Activated CD4-positive, alpha-beta T cell treated with anti-CD3 and anti-CD28 coated beads for 36 hours (primary cell): ENCODE measurements at regions of chr16 and their contacts with region 1.

Region 1: GRCh38 chr16:57576429-57576870 is 34.0 kb downstream of the ADGRG5 start:
- DNase-seq: peak; percentile 91
- ATAC-seq: peak; percentile 82
- H3K4me3 Mint-ChIP-seq: no peak overlapping the region
- H3K27ac Mint-ChIP-seq: no peak overlapping the region
- H3K4me1 Mint-ChIP-seq: peaks cover 33% of the 10 kb centered on the region
- H3K27me3 Mint-ChIP-seq: peaks cover 5% of the 10 kb centered on the region

Region 2: GRCh38 chr16:57500578-57501111 is 75.8 kb before region 1 on chr16:
- CTCF ChIA-PET with region 1: no interaction called
- POLR2A ChIA-PET with region 1: no interaction called
- intact Hi-C with region 1: no loop called
- DNase-seq: no peak
- ATAC-seq: peak; percentile 88
- H3K4me3 Mint-ChIP-seq: no peak overlapping the region
- H3K27ac Mint-ChIP-seq: no peak overlapping the region
- H3K4me1 Mint-ChIP-seq: peaks cover 11% of the 10 kb centered on the region
- H3K27me3 Mint-ChIP-seq: no peaks in the 10 kb centered on the region

Region 3: GRCh38 chr16:57555831-57556230 is 20.6 kb before region 1 on chr16:
- CTCF ChIA-PET with region 1: interaction called, 16 read pairs
- POLR2A ChIA-PET with region 1: no interaction called
- intact Hi-C with region 1: no loop called
- DNase-seq: peak; percentile 47
- ATAC-seq: peak; percentile 69
- H3K4me3 Mint-ChIP-seq: no peak overlapping the region
- H3K27ac Mint-ChIP-seq: no peak overlapping the region
- H3K4me1 Mint-ChIP-seq: peaks cover 16% of the 10 kb centered on the region
- H3K27me3 Mint-ChIP-seq: peaks cover 2% of the 10 kb centered on the region

Region 4: DNA sequence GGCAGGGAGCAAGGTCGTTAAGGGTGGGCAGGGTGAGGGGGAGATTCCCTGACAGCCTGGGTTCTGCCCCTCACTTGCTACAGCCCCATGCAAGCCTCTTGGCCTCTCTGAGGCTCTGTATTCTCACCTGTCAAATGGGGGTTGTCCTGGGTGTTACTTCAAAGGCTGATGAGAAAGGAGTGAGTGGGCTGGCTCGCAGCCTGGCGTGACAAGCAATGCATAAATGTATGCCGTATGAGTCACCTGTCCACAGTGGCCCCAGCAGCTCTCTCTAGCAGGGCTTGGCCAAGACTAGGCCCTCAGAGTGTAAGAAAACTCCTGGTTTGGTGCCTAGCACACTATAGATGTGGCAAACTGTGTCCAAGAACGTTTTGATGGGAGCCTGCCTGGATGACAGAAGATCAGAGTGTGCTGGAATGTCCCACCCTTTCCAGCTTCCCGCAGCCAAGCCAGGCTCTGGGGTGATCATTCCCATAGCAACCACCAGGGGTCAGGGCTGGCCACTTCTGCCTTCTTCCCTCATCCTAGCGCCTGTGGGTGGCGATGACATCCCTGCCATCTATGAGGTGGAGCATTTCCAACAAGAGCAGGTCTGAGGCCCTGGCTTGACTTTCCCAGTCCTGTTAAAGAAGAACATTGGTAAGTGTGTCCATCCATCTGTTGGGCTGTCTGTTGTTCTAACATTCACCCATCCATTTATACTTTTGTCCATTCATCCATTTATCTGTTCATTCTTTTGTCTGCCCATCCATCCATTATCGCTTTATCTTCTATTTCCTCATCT is 14.8 kb after region 1 on chr16:
- CTCF ChIA-PET with region 1: interaction called, 24 read pairs
- POLR2A ChIA-PET with region 1: interaction called, 5 read pairs
- intact Hi-C with region 1: loop called in 1 of 2 experiments (anchors 2 kb)
- DNase-seq: peak; percentile 87
- ATAC-seq: peak; percentile 90
- H3K4me3 Mint-ChIP-seq: peak overlapping the region; percentile 60
- H3K27ac Mint-ChIP-seq: peak overlapping the region; percentile 92
- H3K4me1 Mint-ChIP-seq: peaks cover 32% of the 10 kb centered on the region
- H3K27me3 Mint-ChIP-seq: no peaks in the 10 kb centered on the region

Region 5: DNA sequence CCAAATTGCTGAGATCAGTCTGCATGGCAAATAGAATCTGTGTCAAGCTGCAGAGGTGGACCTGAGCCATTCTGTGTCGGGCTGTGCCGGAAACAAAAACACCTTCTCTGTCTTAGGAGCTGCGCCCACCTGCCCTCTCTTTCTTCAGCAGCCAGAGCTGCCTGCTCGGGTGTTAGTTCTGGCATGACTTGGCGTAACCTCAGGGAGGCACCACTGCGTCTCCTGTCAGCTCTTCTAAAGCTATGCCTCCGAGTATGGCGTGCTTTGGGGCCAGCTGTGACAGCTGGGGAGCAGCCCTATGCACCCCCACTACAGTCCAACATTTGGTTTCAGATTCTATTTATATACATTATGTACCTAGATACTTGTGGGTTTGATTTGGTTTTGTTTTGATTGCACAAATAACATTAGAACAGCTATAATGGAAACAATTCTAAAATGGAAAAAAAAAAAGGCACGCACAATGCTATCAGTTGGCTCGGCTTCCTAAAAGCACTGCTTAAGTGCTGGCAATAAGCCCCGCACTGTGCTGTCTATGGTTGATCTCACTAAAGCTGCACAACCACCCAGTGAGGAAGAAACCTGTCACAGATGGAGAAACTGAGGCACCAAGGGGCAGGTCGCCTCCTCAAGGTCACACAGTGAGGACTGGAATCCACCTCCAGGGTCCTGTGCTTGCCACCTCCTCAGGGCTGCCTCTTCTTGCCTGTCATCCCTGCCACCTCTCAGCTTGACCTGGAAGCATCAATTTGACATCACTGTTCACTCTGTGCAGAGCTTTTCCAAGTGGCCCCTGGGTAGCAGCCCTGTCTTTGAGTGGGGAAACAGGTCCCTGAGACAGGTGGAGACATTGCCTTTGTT is 33.3 kb after region 1 on chr16:
- CTCF ChIA-PET with region 1: interaction called, 20 read pairs
- POLR2A ChIA-PET with region 1: no interaction called
- intact Hi-C with region 1: no loop called
- DNase-seq: peak; percentile 93
- ATAC-seq: peak; percentile 94
- H3K4me3 Mint-ChIP-seq: peak overlapping the region; percentile 48
- H3K27ac Mint-ChIP-seq: peak overlapping the region; percentile 92
- H3K4me1 Mint-ChIP-seq: peaks cover 60% of the 10 kb centered on the region
- H3K27me3 Mint-ChIP-seq: no peaks in the 10 kb centered on the region

Region 6: GRCh38 chr16:57648590-57649442 is 72.4 kb after region 1 on chr16:
- CTCF ChIA-PET with region 1: interaction called, 121 read pairs
- POLR2A ChIA-PET with region 1: no interaction called
- intact Hi-C with region 1: loop called (anchors 1 kb)
- DNase-seq: peak; percentile 92
- ATAC-seq: peak; percentile 90
- H3K4me3 Mint-ChIP-seq: no peak overlapping the region
- H3K27ac Mint-ChIP-seq: peak overlapping the region; percentile 33
- H3K4me1 Mint-ChIP-seq: peaks cover 19% of the 10 kb centered on the region
- H3K27me3 Mint-ChIP-seq: no peaks in the 10 kb centered on the region

Region 7: GRCh38 chr16:57757326-57757786 is 180.9 kb after region 1 on chr16:
- CTCF ChIA-PET with region 1: no interaction called
- POLR2A ChIA-PET with region 1: no interaction called
- intact Hi-C with region 1: loop called in 1 of 2 experiments (anchors 1 kb)
- DNase-seq: peak; percentile 93
- ATAC-seq: peak; percentile 98
- H3K4me3 Mint-ChIP-seq: no peak overlapping the region
- H3K27ac Mint-ChIP-seq: no peak overlapping the region
- H3K4me1 Mint-ChIP-seq: peaks cover 2% of the 10 kb centered on the region
- H3K27me3 Mint-ChIP-seq: no peaks in the 10 kb centered on the region

Region 8: GRCh38 chr16:57994778-57995177 is 418.3 kb after region 1 on chr16:
- CTCF ChIA-PET with region 1: no interaction called
- POLR2A ChIA-PET with region 1: no interaction called
- intact Hi-C with region 1: loop called in 1 of 2 experiments (anchors 5 kb)
- DNase-seq: peak; percentile 66
- ATAC-seq: peak; percentile 35
- H3K4me3 Mint-ChIP-seq: no peak overlapping the region
- H3K27ac Mint-ChIP-seq: no peak overlapping the region
- H3K4me1 Mint-ChIP-seq: peaks cover 38% of the 10 kb centered on the region
- H3K27me3 Mint-ChIP-seq: no peaks in the 10 kb centered on the region